ENCODE measurements at regions of chr7 and their contacts with region 1.

Region 1: GRCh38 chr7:6221340-6222319 is 50.8 kb downstream of the CYTH3 start:
- DNase-seq: peak in 1 of 2 donors; percentile 69
- ATAC-seq: peak; percentile 91 to 94 (median 94)
- H3K4me3 ChIP-seq: no peak overlapping the region
- H3K4me3 Mint-ChIP-seq: peak overlapping the region; percentile 86
- H3K27ac ChIP-seq: peak overlapping the region; percentile 53
- H3K27ac Mint-ChIP-seq: peak overlapping the region; percentile 88 to 92
- H3K4me1 ChIP-seq: peaks cover 16% of the 10 kb centered on the region
- H3K4me1 Mint-ChIP-seq: peaks cover 15 to 37% of the 10 kb centered on the region in 2 donors
- H3K27me3 ChIP-seq: no peaks in the 10 kb centered on the region
- H3K27me3 Mint-ChIP-seq: no peaks in the 10 kb centered on the region
- CTCF ChIP-seq: no peak

Region 2: GRCh38 chr7:6241607-6241973 is 20.0 kb after region 1 on chr7:
- intact Hi-C with region 1: loop called (anchors 1 kb)
- DNase-seq: peak in 1 of 2 donors; percentile 35
- ATAC-seq: peak in 2 of 3 donors; percentile 70 to 71
- H3K4me3 ChIP-seq: no peak overlapping the region
- H3K4me3 Mint-ChIP-seq: peak overlapping the region; percentile 80
- H3K27ac ChIP-seq: peak overlapping the region; percentile 69
- H3K27ac Mint-ChIP-seq: peak overlapping the region; percentile 88 to 89
- H3K4me1 ChIP-seq: peaks cover 36% of the 10 kb centered on the region
- H3K4me1 Mint-ChIP-seq: peaks cover 18 to 48% of the 10 kb centered on the region in 2 donors
- H3K27me3 ChIP-seq: no peaks in the 10 kb centered on the region
- H3K27me3 Mint-ChIP-seq: no peaks in the 10 kb centered on the region
- CTCF ChIP-seq: no peak

Region 3: GRCh38 chr7:6260291-6261187 is 38.9 kb after region 1 on chr7:
- intact Hi-C with region 1: no loop called
- DNase-seq: no peak
- ATAC-seq: no peak
- H3K4me3 ChIP-seq: no peak overlapping the region
- H3K4me3 Mint-ChIP-seq: no peak overlapping the region
- H3K27ac ChIP-seq: no peak overlapping the region
- H3K27ac Mint-ChIP-seq: peak overlapping the region in 1 of 2 donors; percentile 14
- H3K4me1 ChIP-seq: peaks cover 21% of the 10 kb centered on the region
- H3K4me1 Mint-ChIP-seq: peaks cover 38 to 52% of the 10 kb centered on the region in 2 donors
- H3K27me3 ChIP-seq: no peaks in the 10 kb centered on the region
- H3K27me3 Mint-ChIP-seq: no peaks in the 10 kb centered on the region
- CTCF ChIP-seq: no peak

Region 4: GRCh38 chr7:6516387-6516983 is 294.9 kb after region 1 on chr7:
- intact Hi-C with region 1: no loop called
- DNase-seq: peak; percentile 50 to 79
- ATAC-seq: peak; percentile 71 to 86 (median 82)
- H3K4me3 ChIP-seq: peak overlapping the region; percentile 27
- H3K4me3 Mint-ChIP-seq: peak overlapping the region; percentile 79
- H3K27ac ChIP-seq: no peak overlapping the region
- H3K27ac Mint-ChIP-seq: peak overlapping the region in 1 of 2 donors; percentile 18
- H3K4me1 ChIP-seq: peaks cover 6% of the 10 kb centered on the region
- H3K4me1 Mint-ChIP-seq: peaks cover 6 to 14% of the 10 kb centered on the region in 2 donors
- H3K27me3 ChIP-seq: no peaks in the 10 kb centered on the region
- H3K27me3 Mint-ChIP-seq: peaks cover 0 to 9% of the 10 kb centered on the region in 2 donors
- CTCF ChIP-seq: peak; percentile 83

Measured in natural killer cell (primary cell).